ENCODE measurements at regions of chr16 and their contacts with region 1.

Region 1: DNA sequence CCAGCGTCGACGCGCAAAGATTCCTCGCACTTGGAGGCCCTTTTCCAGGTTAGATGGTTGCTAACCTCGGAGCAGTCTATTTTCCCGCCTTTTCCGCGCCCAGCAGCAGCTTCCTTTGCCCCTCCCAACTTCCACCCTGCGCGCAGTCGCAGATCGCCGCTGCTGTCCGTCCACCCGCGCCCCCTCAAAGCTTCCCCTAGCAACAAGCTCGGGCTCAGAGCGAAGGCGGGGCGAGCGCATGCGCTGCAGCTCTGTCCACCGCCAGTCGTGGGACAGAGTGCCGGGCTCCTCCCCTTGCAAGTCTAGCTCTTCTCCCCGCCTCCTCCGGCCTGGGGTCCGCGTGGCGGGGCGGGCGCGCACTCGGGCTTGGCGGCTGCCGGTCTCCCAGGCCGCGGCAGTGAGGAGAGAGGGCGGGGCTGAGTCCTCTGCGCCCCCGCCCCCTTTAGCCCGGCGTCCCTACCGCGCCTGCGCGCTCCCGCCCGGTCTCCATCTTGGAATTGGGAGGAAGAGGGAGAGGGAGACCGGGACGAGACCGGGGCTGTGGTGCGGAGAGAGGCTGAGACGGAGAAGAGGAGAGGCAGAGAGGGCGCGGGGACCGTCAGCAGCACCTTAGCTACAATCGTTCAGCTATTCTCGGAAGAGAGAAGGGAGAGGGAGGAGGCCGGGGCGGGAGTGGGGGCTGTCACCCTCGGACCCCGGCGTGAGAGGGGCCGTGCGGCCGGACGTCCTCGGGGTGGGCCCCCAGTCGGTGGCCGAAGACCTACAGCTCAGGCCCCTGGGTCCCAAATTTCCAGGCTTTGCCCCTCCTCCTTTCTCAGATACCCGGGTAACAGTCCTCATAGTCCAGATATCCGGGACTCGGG is at the start of gene TAOK2:
- DNase-seq: peak; percentile 100

Region 2: GRCh38 chr16:29943846-29944669 is 29.6 kb before region 1 on chr16:
- CTCF ChIA-PET with region 1: interaction called, 8 read pairs
- POLR2A ChIA-PET with region 1: interaction called, 20 read pairs
- DNase-seq: peak; percentile 87

Region 3: DNA sequence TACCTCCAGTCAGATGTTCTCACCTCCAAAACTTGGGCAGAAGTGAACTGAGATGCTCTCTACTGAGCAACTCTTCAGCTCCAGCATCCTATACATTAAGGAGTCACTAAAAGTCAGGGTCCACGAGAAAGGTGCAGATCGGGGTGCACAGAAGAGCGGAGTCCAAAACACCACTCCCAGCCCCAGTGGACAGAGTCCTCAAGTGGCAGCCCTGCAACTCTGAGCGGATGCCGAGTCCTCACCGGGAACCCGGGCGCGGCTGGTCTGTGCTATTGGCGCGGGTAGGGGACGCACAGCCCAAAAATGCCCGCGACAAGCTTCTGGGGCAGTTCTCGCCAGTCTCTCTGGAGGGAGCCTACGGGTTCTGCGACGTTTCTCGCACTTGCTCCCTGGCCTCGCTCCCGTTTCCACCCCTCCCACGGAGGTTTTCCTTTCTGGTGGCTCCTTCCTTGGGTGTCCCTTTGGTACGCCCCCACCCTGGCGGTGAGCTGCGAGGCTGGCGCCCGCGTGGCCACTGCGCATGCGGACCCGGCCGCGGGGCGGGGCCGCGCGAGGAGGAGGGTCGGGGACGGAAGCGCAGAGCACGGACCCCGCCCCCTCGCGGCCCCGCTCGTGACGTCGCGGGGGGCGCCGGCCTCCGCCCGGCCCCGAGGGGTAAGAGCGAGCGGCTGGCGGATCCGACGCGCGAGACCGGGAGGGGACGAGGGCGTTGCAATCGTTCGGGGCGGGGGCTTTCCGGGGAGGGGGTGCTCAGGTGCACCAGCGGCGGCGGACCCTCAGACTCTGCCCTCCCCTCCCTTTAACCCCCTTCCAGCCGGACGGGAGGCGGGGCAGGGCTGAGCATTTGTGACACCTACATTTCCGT is 11.9 kb before region 1 on chr16 and contains the start of gene TMEM219:
- CTCF ChIA-PET with region 1: interaction called, 14 read pairs
- POLR2A ChIA-PET with region 1: interaction called, 102 read pairs
- DNase-seq: peak; percentile 100

Region 4: DNA sequence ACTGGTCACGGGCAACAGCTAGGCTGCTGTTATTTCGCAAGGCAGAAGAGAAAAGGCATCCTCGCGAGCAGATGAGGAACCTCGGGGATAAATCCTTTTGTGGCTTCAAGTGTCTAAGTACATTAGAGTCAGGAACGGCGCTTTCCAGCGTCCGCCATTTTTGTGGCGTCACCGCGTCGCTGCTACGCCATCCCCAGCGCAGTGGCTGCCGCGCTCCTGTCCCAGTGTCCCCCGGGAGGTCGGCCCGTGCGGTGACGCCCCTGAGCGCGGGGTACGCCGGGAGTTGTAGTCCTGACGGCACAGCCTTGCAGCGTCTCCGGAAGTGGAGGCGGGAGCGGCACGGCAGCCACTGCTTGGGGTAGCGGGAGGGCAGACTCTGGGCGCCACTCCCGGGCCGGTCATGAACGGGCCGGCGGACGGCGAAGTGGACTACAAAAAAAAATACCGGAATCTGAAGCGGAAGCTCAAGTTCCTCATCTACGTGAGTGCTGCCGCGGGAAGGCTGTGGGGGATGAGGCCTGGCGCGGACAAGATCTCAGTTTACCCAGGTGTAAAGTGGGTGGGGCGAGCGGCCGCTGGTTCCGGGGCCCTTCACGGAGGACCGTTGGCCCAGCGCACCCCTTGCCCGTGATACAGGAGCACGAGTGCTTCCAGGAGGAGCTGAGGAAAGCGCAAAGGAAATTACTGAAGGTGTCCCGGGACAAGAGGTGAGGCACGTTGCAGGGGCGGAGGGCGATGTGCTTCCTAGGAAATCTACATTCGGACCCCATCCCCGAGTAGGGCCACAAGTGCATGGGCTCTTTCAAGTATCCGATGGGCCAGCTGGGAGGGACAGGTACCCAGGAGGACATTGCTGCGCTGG is 22.5 kb after region 1 on chr16 and contains the start of gene INO80E:
- CTCF ChIA-PET with region 1: interaction called, 5 read pairs
- POLR2A ChIA-PET with region 1: interaction called, 74 read pairs
- DNase-seq: peak; percentile 100

Region 5: DNA sequence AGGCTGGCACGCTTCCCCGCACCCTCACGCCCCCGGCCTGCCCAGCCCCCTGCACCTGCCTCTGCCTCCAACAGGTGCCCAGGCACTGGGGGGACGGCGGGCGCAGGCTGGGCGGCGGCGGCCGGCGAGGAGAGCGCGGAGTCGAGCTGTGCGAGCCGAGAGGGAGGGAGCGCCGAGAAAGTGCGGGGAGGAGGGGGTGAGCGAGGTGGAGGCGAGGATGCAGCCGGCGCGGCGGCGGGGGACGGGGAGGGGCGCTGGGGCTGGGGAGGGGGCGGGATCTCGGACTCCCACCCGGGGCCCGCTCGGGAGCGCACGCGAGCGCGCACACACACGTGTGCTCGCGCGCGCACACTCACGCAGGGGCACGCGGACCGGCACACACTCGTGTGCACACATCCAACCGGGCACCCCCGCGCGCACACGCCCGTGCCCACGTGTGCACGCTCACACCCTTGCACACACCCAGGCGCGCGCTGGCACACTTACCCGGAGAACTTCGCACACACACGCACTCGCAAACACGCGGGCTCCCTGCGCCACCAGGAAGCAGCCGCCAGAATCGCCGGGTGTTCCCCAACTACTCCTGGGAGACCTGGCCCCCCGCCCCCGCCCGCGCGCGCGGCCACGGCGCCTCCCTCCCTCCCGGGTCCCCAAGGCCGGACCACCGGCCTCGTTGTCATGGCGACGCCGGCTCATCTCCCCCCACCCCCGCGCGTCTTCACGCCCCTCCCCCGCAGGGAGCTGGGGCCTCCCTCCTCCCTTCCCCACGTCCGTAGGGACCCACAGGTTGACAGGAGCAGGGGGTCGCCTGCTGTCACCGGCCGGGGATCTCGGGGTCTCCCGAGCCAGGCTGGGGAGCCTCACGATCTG is 37.5 kb after region 1 on chr16 and contains the start of gene DOC2A:
- CTCF ChIA-PET with region 1: no interaction called
- POLR2A ChIA-PET with region 1: no interaction called
- DNase-seq: peak; percentile 81

Measured in HEK293T (cell line).